ENCODE measurements at regions of chr10 and their contacts with region 1.

Region 1: GRCh38 chr10:95430231-95430951 is 130.8 kb downstream of the SORBS1 start:
- DNase-seq: peak; percentile 44
- ATAC-seq: peak; percentile 99
- H3K4me3 Mint-ChIP-seq: no peak overlapping the region
- H3K27ac Mint-ChIP-seq: no peak overlapping the region
- H3K4me1 Mint-ChIP-seq: no peaks in the 10 kb centered on the region
- H3K27me3 Mint-ChIP-seq: no peaks in the 10 kb centered on the region
- CTCF ChIP-seq: peak; percentile 93

Region 2: DNA sequence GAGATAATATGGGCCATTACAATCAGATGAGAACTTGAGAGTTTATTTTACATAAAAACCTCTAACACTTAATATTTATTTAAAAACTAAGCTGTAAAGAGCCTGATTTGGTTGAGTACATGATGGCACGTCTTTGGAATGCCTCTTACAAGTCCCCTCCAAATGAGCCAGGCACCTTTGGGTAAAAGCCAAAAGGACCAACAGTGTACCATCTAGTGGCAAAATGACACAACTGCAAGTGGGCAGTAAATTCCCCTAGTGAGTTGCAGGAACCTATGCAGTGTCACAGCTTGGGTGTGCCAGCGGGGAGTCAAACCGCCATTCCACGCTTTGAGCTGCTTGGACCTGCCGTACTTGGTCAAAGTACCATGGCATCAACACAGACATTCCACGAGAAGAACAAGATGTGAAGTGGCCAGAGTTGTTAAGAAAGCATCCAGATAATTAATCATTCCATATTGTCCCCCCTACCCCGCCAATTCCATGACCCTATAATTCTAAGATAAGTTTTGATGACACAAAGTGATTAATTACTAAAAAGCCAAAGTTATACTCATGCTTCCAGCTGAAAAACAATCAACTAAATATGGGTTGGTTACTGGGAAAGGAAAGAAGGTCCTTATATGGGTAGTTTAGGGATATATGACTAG is 15.6 kb after region 1 on chr10:
- CTCF ChIA-PET with region 1: interaction called, 66 read pairs
- POLR2A ChIA-PET with region 1: no interaction called
- intact Hi-C with region 1: no loop called
- DNase-seq: peak; percentile 44
- ATAC-seq: peak; percentile 72
- H3K4me3 Mint-ChIP-seq: no peak overlapping the region
- H3K27ac Mint-ChIP-seq: no peak overlapping the region
- H3K4me1 Mint-ChIP-seq: peaks cover 4% of the 10 kb centered on the region
- H3K27me3 Mint-ChIP-seq: peaks cover 5% of the 10 kb centered on the region
- CTCF ChIP-seq: peak; percentile 89

Region 3: GRCh38 chr10:95456516-95456915 is 26.1 kb after region 1 on chr10:
- CTCF ChIA-PET with region 1: interaction called, 16 read pairs
- POLR2A ChIA-PET with region 1: no interaction called
- intact Hi-C with region 1: no loop called
- DNase-seq: no peak
- ATAC-seq: no peak
- H3K4me3 Mint-ChIP-seq: no peak overlapping the region
- H3K27ac Mint-ChIP-seq: no peak overlapping the region
- H3K4me1 Mint-ChIP-seq: no peaks in the 10 kb centered on the region
- H3K27me3 Mint-ChIP-seq: peaks cover 4% of the 10 kb centered on the region
- CTCF ChIP-seq: no peak

Region 4: DNA sequence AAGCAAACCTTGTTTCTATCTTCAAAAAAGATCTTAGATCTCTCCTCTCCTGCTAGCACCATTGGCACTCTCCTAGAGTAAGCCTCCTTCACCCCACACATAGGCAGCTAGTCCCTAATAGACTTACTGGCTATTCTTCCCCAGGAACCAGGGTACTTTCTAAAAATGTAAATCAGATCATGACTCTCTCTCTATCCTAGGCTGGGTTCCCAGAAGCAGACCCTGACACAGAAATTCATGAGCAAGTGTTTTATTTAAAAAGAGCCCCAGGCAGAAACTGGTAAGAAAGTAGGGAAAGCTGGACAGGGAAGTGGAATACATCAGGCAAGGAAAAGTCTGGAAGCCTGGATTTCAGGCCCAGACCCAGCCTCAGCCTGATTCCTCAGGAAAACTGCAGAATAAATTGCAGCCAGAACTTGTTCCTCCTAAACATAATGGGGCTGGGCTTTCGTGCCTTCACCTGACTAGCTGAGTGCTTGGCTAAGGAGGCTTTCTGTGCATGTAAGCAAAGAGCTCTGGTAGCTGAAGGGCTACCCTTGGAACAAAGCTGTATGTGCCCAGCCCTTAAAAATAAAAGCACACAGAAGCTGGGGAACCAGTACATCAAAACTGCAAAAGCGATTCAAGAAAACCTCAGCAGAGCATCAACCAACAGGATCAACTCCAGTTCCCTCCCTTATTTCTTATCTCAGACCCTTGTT is 149.6 kb after region 1 on chr10:
- CTCF ChIA-PET with region 1: interaction called, 10 read pairs
- POLR2A ChIA-PET with region 1: no interaction called
- intact Hi-C with region 1: no loop called
- DNase-seq: no peak
- ATAC-seq: no peak
- H3K4me3 Mint-ChIP-seq: no peak overlapping the region
- H3K27ac Mint-ChIP-seq: no peak overlapping the region
- H3K4me1 Mint-ChIP-seq: no peaks in the 10 kb centered on the region
- H3K27me3 Mint-ChIP-seq: peaks cover 23% of the 10 kb centered on the region
- CTCF ChIP-seq: no peak

Region 5: DNA sequence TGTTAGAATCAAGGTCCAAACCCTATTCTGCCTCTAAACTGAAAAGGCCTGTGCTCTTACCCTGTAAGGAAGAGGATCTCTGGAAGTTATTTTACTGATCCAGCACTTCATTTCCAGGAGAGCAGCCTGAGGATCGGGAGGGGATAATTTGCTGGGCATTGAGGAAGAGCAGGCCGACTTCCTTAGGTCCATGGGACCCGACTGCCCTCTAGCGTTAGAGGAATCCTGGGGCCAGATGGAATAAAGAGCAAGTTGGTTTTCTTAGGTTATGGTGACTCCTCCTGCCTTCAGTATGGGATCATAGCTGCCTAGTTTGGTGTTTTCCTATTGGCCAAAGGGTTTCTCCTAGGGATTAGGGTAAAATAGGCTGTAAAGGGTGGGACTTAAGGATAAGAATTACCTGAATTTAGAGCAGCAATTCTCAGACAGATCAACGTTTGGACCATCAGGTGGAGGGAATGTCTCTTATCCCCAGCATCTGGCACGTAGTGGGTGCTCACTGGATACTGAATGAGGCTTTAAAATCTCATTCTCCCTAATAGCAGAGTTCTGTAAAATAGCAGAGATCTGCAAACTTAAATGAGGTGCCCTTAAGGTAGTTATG is 170.8 kb after region 1 on chr10:
- CTCF ChIA-PET with region 1: interaction called, 76 read pairs
- POLR2A ChIA-PET with region 1: no interaction called
- intact Hi-C with region 1: loop called (anchors 1 kb)
- DNase-seq: peak; percentile 70
- ATAC-seq: no peak
- H3K4me3 Mint-ChIP-seq: no peak overlapping the region
- H3K27ac Mint-ChIP-seq: no peak overlapping the region
- H3K4me1 Mint-ChIP-seq: no peaks in the 10 kb centered on the region
- H3K27me3 Mint-ChIP-seq: peaks cover 1% of the 10 kb centered on the region
- CTCF ChIP-seq: peak; percentile 89